Mucosa of descending colon (tissue), 3 donors: ENCODE measurements at regions of chr18 and their contacts with region 1.

Region 1: DNA sequence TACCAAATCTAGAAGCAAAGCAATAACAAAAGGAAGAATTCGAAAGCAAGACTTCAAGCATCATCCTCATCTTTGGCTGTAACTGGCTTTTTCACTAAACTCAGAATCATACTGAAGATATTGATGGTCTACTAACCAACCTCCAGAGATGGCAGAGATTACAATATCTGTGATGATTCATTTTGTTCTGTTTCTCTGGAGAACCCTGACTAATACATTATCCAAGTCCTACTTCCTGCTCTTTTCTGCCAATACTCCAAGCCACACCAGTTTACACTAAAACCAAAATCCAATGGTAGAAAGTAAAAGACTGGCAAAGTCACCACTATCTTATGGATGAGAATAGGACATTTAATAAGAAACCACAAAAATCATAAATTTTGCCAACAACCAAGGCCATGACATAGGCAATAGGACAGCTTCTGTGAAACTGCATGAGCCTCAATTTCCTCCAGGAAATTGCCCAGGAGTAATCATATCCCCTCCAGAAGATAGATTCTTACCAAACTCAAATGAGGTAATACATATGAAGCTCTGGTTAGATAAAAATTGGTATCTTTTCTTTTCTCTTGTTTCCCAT is 159.8 kb downstream of the METTL4 start:
- DNase-seq: no peak
- ATAC-seq: no peak
- H3K4me3 ChIP-seq: no peak overlapping the region
- H3K4me1 ChIP-seq: no peaks in the 10 kb centered on the region
- CTCF ChIP-seq: no peak

Region 2: GRCh38 chr18:2354292-2354691 is 57.2 kb before region 1 on chr18:
- intact Hi-C with region 1: loop called in 1 of 2 experiments (anchors 10 kb)
- DNase-seq: no peak
- ATAC-seq: no peak
- H3K4me3 ChIP-seq: no peak overlapping the region
- H3K4me1 ChIP-seq: no peaks in the 10 kb centered on the region
- CTCF ChIP-seq: no peak

Region 3: GRCh38 chr18:2547477-2548087 is 136.1 kb after region 1 on chr18:
- intact Hi-C with region 1: no loop called
- DNase-seq: peak in 1 of 3 donors; percentile 18
- ATAC-seq: peak; percentile 61
- H3K4me3 ChIP-seq: no peak overlapping the region
- H3K4me1 ChIP-seq: no peaks in the 10 kb centered on the region
- CTCF ChIP-seq: no peak